Colonic mucosa (tissue), 4 donors: ENCODE measurements at regions of chr17 and their contacts with region 1.

Region 1: GRCh38 chr17:48181653-48182052 is 74.1 kb downstream of the SNX11 start:
- DNase-seq: peak; percentile 25
- H3K4me3 ChIP-seq: no peak overlapping the region
- H3K27ac ChIP-seq: no peak overlapping the region
- H3K4me1 ChIP-seq: no peaks in the 10 kb centered on the region
- H3K27me3 ChIP-seq: no peaks in the 10 kb centered on the region
- CTCF ChIP-seq: peak; percentile 22

Region 2: GRCh38 chr17:47604598-47604927 is 577.1 kb before region 1 on chr17:
- intact Hi-C with region 1: no loop called
- DNase-seq: no peak
- H3K4me3 ChIP-seq: no peak overlapping the region
- H3K27ac ChIP-seq: no peak overlapping the region
- H3K4me1 ChIP-seq: no peaks in the 10 kb centered on the region
- H3K27me3 ChIP-seq: no peaks in the 10 kb centered on the region
- CTCF ChIP-seq: no peak

Region 3: DNA sequence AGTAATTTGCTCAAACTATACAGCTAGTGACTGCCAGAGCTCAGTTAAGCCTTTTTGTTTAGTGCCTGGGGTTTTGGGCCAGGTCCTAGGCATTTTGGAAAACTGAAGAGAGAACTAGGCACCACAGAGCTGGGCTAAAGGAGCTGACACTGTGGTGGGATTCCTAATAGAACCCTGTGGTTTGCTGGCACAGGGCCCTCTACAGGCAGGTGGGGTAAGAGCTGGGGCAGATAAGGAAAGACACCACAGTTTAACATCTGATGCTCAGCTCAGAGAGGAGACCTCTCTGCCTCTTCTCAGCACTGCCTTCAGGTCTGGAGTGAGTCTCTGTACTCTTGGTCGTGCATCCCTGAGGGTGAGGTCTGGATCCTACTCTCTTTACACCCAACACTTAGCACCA is 47.1 kb after region 1 on chr17:
- intact Hi-C with region 1: no loop called
- DNase-seq: no peak
- H3K4me3 ChIP-seq: no peak overlapping the region
- H3K27ac ChIP-seq: no peak overlapping the region
- H3K4me1 ChIP-seq: no peaks in the 10 kb centered on the region
- H3K27me3 ChIP-seq: no peaks in the 10 kb centered on the region
- CTCF ChIP-seq: no peak

Region 4: DNA sequence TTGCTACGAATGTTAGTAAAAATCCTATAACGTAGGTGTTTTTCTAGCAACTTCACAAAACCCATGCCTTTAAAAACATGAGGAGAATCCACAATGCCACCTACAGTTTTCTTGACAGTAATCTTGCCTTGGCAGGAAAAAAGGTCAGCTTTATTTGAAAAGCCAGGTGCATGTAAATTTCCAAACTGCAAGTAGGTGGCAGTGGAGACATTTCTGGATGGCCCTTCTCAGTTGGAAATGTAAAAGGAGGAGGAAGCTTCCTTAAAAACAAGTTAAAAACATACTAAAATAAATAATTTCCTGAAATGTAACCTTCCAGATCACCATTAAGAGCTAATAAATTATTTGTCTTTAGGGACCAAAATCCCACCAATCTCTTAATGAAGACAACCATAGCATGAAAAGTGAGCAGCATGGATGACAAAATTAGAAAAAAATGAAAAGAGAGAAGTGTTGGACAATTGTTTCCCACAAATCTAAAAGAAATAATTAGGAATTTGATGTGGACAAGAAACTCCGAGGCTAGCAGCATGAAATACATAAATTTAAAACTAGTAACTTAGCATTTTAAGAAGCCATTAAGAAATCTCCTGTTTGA is 78.1 kb after region 1 on chr17:
- intact Hi-C with region 1: loop called (anchors 10 kb)
- DNase-seq: peak; percentile 46
- H3K4me3 ChIP-seq: no peak overlapping the region
- H3K27ac ChIP-seq: no peak overlapping the region
- H3K4me1 ChIP-seq: peaks cover 5% of the 10 kb centered on the region
- H3K27me3 ChIP-seq: no peaks in the 10 kb centered on the region
- CTCF ChIP-seq: peak; percentile 61

Region 5: DNA sequence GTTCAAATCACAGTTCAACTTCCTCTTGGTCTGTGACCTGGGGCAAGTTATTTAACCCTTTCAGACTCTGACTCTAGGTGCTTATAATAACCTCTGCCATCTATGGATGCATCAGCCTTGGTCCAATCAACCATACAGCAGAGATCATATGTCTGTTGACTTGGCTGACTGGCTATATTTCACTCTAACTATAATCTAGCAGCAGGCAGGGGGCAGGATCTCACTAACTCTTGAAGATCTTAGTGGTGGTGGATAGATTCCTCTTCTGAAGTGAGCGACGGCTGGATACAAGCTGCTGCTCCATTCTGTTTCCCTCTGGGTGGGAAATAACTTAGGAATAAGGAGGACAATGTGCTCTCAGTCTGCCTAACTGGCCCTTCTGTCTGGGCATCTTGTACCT is 101.8 kb after region 1 on chr17:
- intact Hi-C with region 1: no loop called
- DNase-seq: no peak
- H3K4me3 ChIP-seq: no peak overlapping the region
- H3K27ac ChIP-seq: no peak overlapping the region
- H3K4me1 ChIP-seq: no peaks in the 10 kb centered on the region
- H3K27me3 ChIP-seq: no peaks in the 10 kb centered on the region
- CTCF ChIP-seq: no peak